Breast epithelium (tissue), 4 donors: ENCODE measurements at regions of chr10 and their contacts with region 1.

Region 1: DNA sequence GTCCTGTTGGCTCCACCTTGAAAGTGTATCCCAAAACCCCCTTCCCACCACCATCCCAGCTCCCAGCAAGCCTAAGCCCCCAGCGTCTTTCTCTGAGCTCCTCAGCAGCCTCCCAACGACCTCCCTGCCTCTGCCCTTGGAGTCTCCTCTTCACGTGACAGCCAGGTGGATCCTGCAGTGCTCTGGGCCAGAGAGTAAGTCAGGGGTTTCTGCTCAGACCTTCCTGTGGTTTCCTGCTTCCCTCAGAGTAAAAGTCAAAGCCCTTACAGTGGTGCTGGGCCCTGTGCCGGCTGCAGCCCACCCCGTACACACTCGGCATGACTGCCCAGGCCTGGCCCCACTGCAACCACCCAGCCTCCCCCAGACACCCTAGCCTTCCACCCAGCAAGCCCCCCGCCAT is 51.9 kb downstream of the OAT start:
- DNase-seq: no peak
- H3K4me3 ChIP-seq: no peak overlapping the region
- H3K27ac ChIP-seq: no peak overlapping the region
- H3K4me1 ChIP-seq: no peaks in the 10 kb centered on the region
- H3K27me3 ChIP-seq: no peaks in the 10 kb centered on the region
- CTCF ChIP-seq: no peak
- POLR2A ChIP-seq: no peak

Region 2: DNA sequence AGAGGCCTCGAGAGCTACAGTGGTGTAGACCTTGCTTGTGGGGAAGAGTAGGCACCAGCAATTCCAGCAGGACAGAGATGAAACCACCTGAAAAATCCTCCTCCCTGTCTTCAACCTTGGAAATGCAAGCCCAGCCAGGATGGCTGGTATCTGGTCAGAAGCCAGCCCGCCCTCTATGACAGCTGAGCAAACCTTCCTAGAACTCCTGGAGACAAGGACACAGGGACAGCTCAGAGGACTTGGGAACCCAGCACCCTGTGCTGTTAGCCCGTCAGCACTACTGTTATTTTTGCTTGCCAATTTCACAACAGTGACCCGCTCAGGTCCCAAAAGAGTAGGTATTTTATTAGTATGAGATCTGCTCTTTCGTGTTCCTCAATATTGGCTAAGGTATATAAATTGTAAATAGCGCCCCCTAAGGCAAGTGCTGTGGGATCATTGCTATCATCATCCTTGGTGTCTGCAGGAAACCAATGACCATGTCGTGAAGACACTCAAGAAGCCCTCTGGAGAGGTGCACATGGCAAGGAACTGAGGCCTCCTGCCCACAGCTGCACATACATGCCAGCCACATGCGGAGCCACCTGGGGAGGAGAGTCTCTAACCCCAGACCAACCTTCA is 116.9 kb before region 1 on chr10:
- intact Hi-C with region 1: no loop called
- DNase-seq: no peak
- H3K4me3 ChIP-seq: no peak overlapping the region
- H3K27ac ChIP-seq: no peak overlapping the region
- H3K4me1 ChIP-seq: no peaks in the 10 kb centered on the region
- H3K27me3 ChIP-seq: no peaks in the 10 kb centered on the region
- CTCF ChIP-seq: no peak
- POLR2A ChIP-seq: no peak

Region 3: GRCh38 chr10:124320778-124321432 is 45.9 kb before region 1 on chr10:
- intact Hi-C with region 1: loop called (anchors 1 kb)
- DNase-seq: no peak
- H3K4me3 ChIP-seq: no peak overlapping the region
- H3K27ac ChIP-seq: no peak overlapping the region
- H3K4me1 ChIP-seq: no peaks in the 10 kb centered on the region
- H3K27me3 ChIP-seq: no peaks in the 10 kb centered on the region
- CTCF ChIP-seq: no peak
- POLR2A ChIP-seq: no peak